ENCODE measurements at regions of chr1 and their contacts with region 1.

Region 1: GRCh38 chr1:198829944-198830343 is 191.1 kb downstream of the PTPRC start:
- DNase-seq: no peak
- ATAC-seq: peak in 1 of 8 donors; percentile 21
- H3K4me3 ChIP-seq: no peak overlapping the region
- H3K27ac ChIP-seq: no peak overlapping the region
- H3K4me1 ChIP-seq: no peaks in the 10 kb centered on the region
- H3K27me3 ChIP-seq: no peaks in the 10 kb centered on the region
- CTCF ChIP-seq: peak in 1 of 9 donors; percentile 19

Region 2: GRCh38 chr1:198408716-198409115 is 421.2 kb before region 1 on chr1:
- intact Hi-C with region 1: no loop called
- DNase-seq: no peak
- ATAC-seq: no peak
- H3K4me3 ChIP-seq: no peak overlapping the region
- H3K27ac ChIP-seq: no peak overlapping the region
- H3K4me1 ChIP-seq: no peaks in the 10 kb centered on the region
- H3K27me3 ChIP-seq: peaks cover 0 to 7% (median 0%) of the 10 kb centered on the region in 7 donors
- CTCF ChIP-seq: no peak

Region 3: DNA sequence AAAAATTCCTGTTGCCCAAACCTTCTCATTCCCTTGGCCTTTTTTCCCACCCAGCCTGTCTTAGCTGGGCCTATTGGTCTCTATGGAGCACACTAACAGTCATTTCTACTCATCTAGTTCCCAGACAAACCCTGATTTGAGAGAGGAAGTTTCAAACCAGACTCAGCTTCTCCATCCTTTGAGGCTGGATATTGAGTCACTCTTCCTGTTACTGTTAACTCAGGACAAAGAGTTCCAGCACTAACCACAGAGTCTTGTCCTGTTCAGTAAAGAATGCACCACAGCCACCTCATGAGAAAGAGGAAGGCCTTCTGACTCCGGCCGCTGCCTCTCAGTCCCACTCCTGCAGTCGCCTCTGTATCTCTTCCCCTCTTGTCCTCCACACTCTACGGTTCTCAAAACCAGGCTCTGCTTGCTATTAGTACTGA is 53.3 kb before region 1 on chr1:
- intact Hi-C with region 1: no loop called
- DNase-seq: peak; percentile 26 to 29
- ATAC-seq: peak; percentile 64 to 97 (median 94)
- H3K4me3 ChIP-seq: no peak overlapping the region
- H3K27ac ChIP-seq: peak overlapping the region; percentile 44 to 84 (median 56)
- H3K4me1 ChIP-seq: peaks cover 0 to 51% (median 3%) of the 10 kb centered on the region in 9 donors
- H3K27me3 ChIP-seq: no peaks in the 10 kb centered on the region
- CTCF ChIP-seq: no peak

Region 4: DNA sequence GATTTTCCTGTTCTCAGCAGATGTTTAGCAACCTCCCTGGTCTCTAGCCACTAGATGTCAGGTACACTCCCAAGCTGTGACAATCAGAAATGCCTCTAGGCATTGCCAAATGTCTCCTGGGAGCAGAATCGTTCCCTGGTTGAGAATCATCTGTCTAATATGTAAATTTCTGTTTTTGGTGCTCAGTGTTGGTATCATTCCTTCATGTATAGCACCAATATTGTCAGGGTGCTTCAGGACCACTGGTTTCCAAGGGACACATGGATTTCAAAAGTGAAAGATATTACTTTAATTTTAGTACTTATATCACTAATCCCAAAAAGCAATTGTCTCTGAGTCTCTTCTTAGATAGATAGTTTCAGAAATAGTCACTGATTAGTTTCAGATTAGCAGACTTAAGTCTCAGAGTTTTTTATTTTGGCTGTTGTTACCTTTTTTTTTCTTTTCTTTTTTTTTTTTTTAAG is 31.0 kb before region 1 on chr1:
- intact Hi-C with region 1: loop called in 1 of 10 experiments (anchors 2 kb)
- DNase-seq: no peak
- ATAC-seq: no peak
- H3K4me3 ChIP-seq: no peak overlapping the region
- H3K27ac ChIP-seq: no peak overlapping the region
- H3K4me1 ChIP-seq: no peaks in the 10 kb centered on the region
- H3K27me3 ChIP-seq: no peaks in the 10 kb centered on the region
- CTCF ChIP-seq: peak in 5 of 9 donors; percentile 11 to 39 (median 16)

Region 5: GRCh38 chr1:198848649-198849048 is 18.7 kb after region 1 on chr1:
- intact Hi-C with region 1: no loop called
- DNase-seq: no peak
- ATAC-seq: no peak
- H3K4me3 ChIP-seq: no peak overlapping the region
- H3K27ac ChIP-seq: no peak overlapping the region
- H3K4me1 ChIP-seq: no peaks in the 10 kb centered on the region
- H3K27me3 ChIP-seq: no peaks in the 10 kb centered on the region
- CTCF ChIP-seq: no peak

Measured in heart right ventricle (tissue), 16 donors.